Right lobe of liver (tissue), 6 donors: ENCODE measurements at regions of chr20 and their contacts with region 1.

Region 1: DNA sequence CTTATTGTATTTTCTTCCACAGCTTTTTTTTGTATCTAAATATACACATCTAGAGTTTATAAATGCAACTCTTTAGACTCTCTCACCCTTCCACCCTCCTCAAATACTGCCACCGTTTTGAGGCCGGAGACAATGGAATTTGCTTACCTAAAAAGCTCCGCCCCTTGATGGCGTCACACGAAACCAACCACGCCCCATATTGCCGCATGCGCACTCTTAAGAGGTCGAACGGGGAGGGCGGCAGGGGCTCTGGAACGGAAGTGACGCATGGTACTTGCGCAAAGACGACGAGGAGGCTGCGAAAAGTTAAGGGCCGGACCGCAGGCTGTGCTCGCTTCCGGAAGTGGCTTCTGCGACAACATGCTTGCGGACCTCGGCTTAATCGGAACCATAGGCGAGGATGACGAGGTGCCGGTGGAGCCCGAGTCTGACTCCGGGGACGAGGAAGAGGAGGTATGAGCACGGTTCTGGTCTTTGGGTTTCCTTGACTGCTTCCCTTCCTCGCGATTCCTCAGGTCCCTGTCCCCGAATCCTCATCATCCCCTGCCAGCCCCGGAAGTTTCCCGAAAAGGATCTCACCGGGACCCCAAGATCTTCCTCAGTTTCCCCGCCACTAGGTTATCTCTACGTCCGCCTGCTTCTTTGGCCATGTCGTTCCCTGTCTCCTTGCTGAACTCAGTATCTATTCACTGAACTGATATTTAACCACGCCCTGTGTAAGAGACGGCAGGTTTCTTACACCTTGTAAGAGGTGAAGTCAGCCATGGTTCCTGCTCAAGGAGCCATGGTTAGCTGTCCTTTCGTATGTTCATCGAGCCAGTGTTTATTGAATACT is at the start of gene DDX27:
- DNase-seq: peak; percentile 96 to 98 (median 98)
- ATAC-seq: peak; percentile 95 to 97 (median 96)
- H3K4me3 ChIP-seq: peak within 1 kb of the TSS; percentile 50 to 71 (median 65)
- H3K27ac ChIP-seq: peak within 1 kb of the TSS; percentile 65 to 78 (median 66)
- H3K4me1 ChIP-seq: peaks cover 0 to 16% (median 3%) of the 10 kb centered on the region in 4 donors
- H3K27me3 ChIP-seq: no peaks in the 10 kb centered on the region
- CTCF ChIP-seq: no peak
- POLR2A ChIP-seq: peak; percentile 73
- total RNA-seq, gene DDX27: 7.6 to 15.7 (median 11.6) TPM

Region 2: GRCh38 chr20:49136817-49137571 is 82.3 kb before region 1 on chr20:
- intact Hi-C with region 1: loop called in 1 of 2 experiments (anchors 5 kb)
- DNase-seq: no peak
- ATAC-seq: no peak
- H3K4me3 ChIP-seq: no peak overlapping the region
- H3K27ac ChIP-seq: no peak overlapping the region
- H3K4me1 ChIP-seq: no peaks in the 10 kb centered on the region
- H3K27me3 ChIP-seq: no peaks in the 10 kb centered on the region
- CTCF ChIP-seq: no peak
- POLR2A ChIP-seq: no peak